Kidney (tissue), 22 donors: ENCODE measurements at regions of chr19 and their contacts with region 1.

Region 1: GRCh38 chr19:6039541-6040225 is 61.7 kb upstream of the RANBP3 start:
- DNase-seq: peak in 3 of 5 donors; percentile 4 to 54 (median 27)
- H3K4me3 ChIP-seq: no peak overlapping the region
- H3K27ac ChIP-seq: no peak overlapping the region
- H3K4me1 ChIP-seq: no peaks in the 10 kb centered on the region
- H3K27me3 ChIP-seq: no peaks in the 10 kb centered on the region
- CTCF ChIP-seq: no peak

Region 2: DNA sequence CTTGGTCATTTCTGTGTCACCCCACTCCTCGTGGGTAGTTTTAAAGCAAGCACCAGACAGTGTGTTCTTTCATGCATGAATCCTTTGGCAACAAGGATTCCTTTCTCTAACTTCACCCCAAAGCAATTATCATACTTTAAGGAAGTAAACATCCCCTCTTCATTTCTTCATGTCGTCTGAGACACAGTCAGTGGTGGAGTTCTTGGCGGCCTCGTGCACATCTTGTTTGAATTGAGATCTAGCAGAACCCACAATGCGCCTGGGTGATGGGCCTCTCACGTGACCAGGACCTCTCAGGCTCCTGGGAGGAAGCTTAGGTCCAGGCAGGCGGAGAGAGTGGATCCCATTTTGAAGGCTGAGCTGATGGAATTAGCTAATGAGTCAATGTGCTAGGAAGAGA is 98.4 kb after region 1 on chr19:
- intact Hi-C with region 1: loop called (anchors 5 kb)
- DNase-seq: no peak
- H3K4me3 ChIP-seq: no peak overlapping the region
- H3K27ac ChIP-seq: no peak overlapping the region
- H3K4me1 ChIP-seq: no peaks in the 10 kb centered on the region
- H3K27me3 ChIP-seq: no peaks in the 10 kb centered on the region
- CTCF ChIP-seq: no peak